Mammary epithelial cell (primary cell): ENCODE measurements at regions of chr20 and their contacts with region 1.

Region 1: GRCh38 chr20:2172305-2173175 is 70.9 kb downstream of the STK35 start:
- DNase-seq: peak; percentile 23
- H3K4me3 ChIP-seq: no peak overlapping the region
- H3K27ac ChIP-seq: no peak overlapping the region
- H3K4me1 ChIP-seq: no peaks in the 10 kb centered on the region
- H3K27me3 ChIP-seq: no peaks in the 10 kb centered on the region
- CTCF ChIP-seq: peak; percentile 85 to 94

Region 2: DNA sequence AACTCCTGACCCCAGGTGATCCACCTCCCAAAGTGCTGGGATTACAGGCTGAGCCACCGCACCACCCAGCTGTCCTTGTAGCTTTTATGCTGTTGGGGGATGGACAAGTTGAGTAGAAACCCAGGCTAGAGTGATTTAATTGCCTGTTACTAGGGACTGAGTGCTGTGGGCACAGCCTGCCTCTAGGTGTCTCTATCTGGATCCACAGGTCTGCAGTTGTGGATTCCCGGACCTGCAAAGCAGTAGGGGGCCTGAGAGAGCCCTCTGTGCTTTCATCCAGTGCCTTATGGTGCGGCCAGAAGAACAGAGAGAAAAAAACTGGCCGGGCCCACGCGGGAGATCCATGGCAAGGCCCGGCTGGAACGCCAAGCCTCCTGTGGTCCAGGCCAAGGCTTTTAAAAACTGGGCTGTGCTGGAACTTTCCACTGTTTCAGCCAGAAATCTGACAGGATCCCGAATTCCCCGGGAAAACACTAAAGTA is 272.2 kb before region 1 on chr20:
- CTCF ChIA-PET with region 1: no interaction called
- dilution Hi-C with region 1: no loop called
- in situ Hi-C with region 1: no loop called
- intact Hi-C with region 1: loop called (anchors 1 kb)
- DNase-seq: peak; percentile 65
- H3K4me3 ChIP-seq: no peak overlapping the region
- H3K27ac ChIP-seq: no peak overlapping the region
- H3K4me1 ChIP-seq: peaks cover 19% of the 10 kb centered on the region
- H3K27me3 ChIP-seq: no peaks in the 10 kb centered on the region
- CTCF ChIP-seq: peak; percentile 74 to 78

Region 3: GRCh38 chr20:1965520-1966351 is 206.8 kb before region 1 on chr20:
- CTCF ChIA-PET with region 1: interaction called, 3 read pairs
- dilution Hi-C with region 1: no loop called
- in situ Hi-C with region 1: loop called in 1 of 2 experiments (anchors 10 kb)
- intact Hi-C with region 1: loop called (anchors 1 kb)
- DNase-seq: peak; percentile 37
- H3K4me3 ChIP-seq: no peak overlapping the region
- H3K27ac ChIP-seq: no peak overlapping the region
- H3K4me1 ChIP-seq: peaks cover 3% of the 10 kb centered on the region
- H3K27me3 ChIP-seq: no peaks in the 10 kb centered on the region
- CTCF ChIP-seq: peak; percentile 82 to 94

Region 4: GRCh38 chr20:1987826-1988225 is 184.7 kb before region 1 on chr20:
- CTCF ChIA-PET with region 1: no interaction called
- dilution Hi-C with region 1: loop called (anchors 5 kb)
- in situ Hi-C with region 1: no loop called
- intact Hi-C with region 1: no loop called
- DNase-seq: peak; percentile 11
- H3K4me3 ChIP-seq: no peak overlapping the region
- H3K27ac ChIP-seq: no peak overlapping the region
- H3K4me1 ChIP-seq: no peaks in the 10 kb centered on the region
- H3K27me3 ChIP-seq: peaks cover 6% of the 10 kb centered on the region
- CTCF ChIP-seq: no peak

Region 5: DNA sequence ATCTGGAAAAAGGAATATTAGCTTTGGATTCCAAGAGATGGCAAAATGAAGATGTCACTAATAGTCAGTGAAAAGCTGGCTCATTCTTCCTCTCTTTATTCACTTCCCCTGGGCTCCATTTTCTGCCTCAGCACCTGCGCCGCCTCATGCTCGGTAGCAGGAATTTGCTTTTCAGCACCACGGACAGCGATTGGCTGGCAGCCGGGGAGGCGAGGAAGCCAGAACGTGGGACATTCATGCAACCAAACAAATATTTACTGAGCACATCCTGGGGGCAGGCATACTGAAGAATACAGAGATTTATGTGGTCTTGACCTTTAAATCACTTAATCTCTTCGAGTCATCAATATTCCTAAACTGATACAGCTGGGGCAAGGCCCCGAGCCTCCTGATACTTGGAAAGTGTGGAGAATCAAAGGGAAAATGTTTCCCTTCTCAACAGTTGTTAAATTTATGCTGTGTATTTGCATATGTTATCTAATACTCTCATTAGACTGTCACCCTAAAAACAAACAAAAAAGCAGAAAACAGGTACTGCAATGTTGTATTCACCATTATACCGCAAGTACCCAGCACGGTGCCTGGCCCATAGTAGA is 166.6 kb before region 1 on chr20:
- CTCF ChIA-PET with region 1: interaction called, 11 read pairs
- dilution Hi-C with region 1: no loop called
- in situ Hi-C with region 1: loop called in 1 of 2 experiments (anchors 10 kb)
- intact Hi-C with region 1: loop called (anchors 1 kb)
- DNase-seq: peak; percentile 54
- H3K4me3 ChIP-seq: no peak overlapping the region
- H3K27ac ChIP-seq: no peak overlapping the region
- H3K4me1 ChIP-seq: no peaks in the 10 kb centered on the region
- H3K27me3 ChIP-seq: no peaks in the 10 kb centered on the region
- CTCF ChIP-seq: peak in 1 of 2 donors; percentile 8

Region 6: DNA sequence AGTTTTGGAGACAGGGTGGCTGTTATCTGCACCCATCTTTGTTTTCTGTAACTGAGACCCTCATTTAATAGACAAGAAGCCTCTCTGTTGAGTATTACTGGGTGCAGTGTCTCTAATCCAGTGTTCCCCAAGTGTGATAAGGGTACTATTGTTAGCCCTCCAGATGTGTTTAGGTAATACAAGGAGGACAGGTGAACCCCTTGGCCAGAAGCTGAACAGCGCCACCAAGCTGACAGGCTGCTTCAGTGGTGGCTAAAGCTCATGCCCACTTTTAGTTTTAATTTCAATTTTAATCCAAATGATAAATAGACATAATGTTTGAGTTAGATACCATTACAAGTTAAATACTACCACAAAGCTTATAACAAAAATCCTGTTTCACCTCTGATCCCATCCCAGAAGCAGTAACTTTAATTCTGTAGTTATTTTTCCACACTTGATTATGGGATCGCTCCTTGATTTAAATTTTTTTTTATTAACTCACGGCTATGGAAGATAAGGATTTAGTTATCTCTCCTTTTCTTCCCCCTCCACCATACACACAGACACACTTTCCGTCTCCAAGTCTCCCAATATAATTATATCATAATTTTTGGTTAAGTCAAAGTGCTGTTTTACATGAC is 79.3 kb before region 1 on chr20:
- CTCF ChIA-PET with region 1: interaction called, 3 read pairs
- dilution Hi-C with region 1: no loop called
- in situ Hi-C with region 1: no loop called
- intact Hi-C with region 1: loop called (anchors 1 kb)
- DNase-seq: peak; percentile 9
- H3K4me3 ChIP-seq: no peak overlapping the region
- H3K27ac ChIP-seq: no peak overlapping the region
- H3K4me1 ChIP-seq: no peaks in the 10 kb centered on the region
- H3K27me3 ChIP-seq: no peaks in the 10 kb centered on the region
- CTCF ChIP-seq: peak; percentile 87 to 89

Region 7: GRCh38 chr20:2101865-2102584 is 70.5 kb before region 1 on chr20:
- CTCF ChIA-PET with region 1: no interaction called
- dilution Hi-C with region 1: no loop called
- in situ Hi-C with region 1: no loop called
- intact Hi-C with region 1: loop called (anchors 2 kb)
- DNase-seq: peak; percentile 91
- H3K4me3 ChIP-seq: peak overlapping the region; percentile 77 to 91 (median 89)
- H3K27ac ChIP-seq: peak overlapping the region; percentile 99
- H3K4me1 ChIP-seq: peaks cover 22% of the 10 kb centered on the region
- H3K27me3 ChIP-seq: no peaks in the 10 kb centered on the region
- CTCF ChIP-seq: no peak